Mammary epithelial cell (primary cell): ENCODE measurements at regions of chr6 and their contacts with region 1.

Region 1: DNA sequence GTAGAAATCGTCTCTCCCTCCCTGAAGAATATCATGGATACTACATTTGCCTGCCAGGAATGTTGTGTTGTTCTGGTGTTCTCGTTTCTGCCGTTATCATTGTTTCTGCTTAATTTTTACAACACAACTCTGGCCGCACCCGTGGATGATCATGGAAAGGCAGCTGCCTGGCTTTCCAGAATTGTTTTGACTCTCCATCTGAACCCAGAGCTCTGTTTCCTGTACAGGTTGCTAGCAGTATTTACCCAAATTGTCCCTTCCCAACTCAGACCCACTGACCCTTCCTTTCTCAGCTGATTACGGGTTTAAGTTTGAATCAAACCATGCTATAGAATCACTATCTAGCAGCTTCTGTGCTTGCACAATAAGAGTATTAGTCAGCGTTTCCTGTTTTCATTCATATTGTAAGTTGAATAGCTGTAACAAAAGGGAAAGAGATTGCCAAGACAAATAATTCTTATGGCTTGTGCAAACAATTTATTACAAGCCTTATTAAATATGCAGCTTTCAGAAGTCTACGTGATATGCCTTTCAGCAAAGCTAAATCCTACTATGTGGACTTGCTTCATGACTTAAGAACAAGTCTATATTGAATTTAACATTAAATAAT is 139.0 kb downstream of the MTHFD1L start:
- DNase-seq: peak; percentile 83
- H3K4me3 ChIP-seq: no peak overlapping the region
- H3K27ac ChIP-seq: peak overlapping the region; percentile 12
- H3K4me1 ChIP-seq: peaks cover 12% of the 10 kb centered on the region
- H3K27me3 ChIP-seq: no peaks in the 10 kb centered on the region
- CTCF ChIP-seq: no peak

Region 2: GRCh38 chr6:150992262-150992661 is 12.3 kb before region 1 on chr6:
- CTCF ChIA-PET with region 1: interaction called, 10 read pairs
- dilution Hi-C with region 1: no loop called
- in situ Hi-C with region 1: no loop called
- intact Hi-C with region 1: no loop called
- DNase-seq: no peak
- H3K4me3 ChIP-seq: no peak overlapping the region
- H3K27ac ChIP-seq: no peak overlapping the region
- H3K4me1 ChIP-seq: no peaks in the 10 kb centered on the region
- H3K27me3 ChIP-seq: no peaks in the 10 kb centered on the region
- CTCF ChIP-seq: no peak

Region 3: DNA sequence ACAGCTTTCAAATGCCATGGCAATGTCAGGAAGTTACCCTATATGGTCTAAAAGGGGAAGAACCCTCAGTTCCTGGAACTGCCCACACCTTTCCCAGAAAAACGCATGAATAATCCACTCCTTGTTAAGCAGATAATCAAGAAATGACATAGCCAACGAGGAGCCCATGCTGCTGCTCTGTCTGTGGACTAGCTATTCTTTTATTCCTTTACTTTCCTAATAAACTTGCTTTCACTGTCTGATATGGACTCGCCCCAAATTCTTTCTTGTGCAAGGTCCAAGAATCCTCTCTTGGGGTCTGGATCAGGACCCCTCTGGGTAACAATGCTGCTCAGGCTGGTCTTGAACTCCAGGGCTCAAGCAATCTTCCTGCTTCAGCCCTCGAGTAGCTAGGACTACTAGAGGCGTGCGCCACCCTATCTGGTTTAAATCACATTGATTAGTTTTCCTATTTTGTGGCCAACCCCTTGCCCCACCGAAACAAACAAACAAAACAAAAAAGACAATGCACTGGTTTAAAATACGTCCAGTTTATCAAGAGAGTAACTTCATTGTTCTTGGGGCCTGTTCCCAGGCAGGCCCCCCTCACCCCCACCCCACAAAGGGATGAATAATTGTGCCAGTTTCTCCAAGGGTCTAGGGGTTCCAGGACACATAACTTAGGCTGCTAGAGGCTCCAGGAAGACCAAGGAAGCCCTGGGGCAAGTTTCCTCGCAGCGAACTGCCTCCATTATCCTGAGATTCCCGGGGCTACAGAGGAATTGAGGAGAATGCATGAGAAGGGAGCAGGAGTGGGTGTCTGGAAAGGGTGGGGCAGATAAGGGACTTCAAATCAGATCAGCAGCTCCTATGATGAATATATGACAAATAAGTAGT is 225.1 kb after region 1 on chr6:
- CTCF ChIA-PET with region 1: no interaction called
- dilution Hi-C with region 1: no loop called
- in situ Hi-C with region 1: no loop called
- intact Hi-C with region 1: no loop called
- DNase-seq: no peak
- H3K4me3 ChIP-seq: no peak overlapping the region
- H3K27ac ChIP-seq: no peak overlapping the region
- H3K4me1 ChIP-seq: no peaks in the 10 kb centered on the region
- H3K27me3 ChIP-seq: no peaks in the 10 kb centered on the region
- CTCF ChIP-seq: no peak